Calu3 (cell line): ENCODE measurements at regions of chr7 and their contacts with region 1.

Region 1: DNA sequence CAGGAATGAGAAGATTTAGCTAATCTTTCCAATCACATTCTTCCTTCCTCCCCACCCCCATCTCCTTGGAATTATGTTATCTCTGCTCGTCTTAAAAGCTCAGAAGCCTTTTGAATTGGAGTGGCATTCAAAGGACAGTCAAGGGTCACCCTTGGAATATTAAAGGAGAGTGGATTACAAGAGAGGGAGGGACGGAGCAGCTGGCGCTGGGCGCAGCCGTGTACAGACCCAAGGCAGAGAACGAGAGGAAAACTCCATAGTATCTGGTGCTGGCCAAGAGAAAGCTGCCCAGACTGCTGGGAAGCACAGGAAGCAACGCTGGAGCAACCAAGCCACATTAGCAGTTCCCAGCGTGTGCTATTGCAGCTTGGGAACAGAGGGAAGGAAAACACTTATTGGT is 95.7 kb downstream of the POU6F2 start:
- DNase-seq: no peak
- H3K4me3 Mint-ChIP-seq: no peak overlapping the region
- H3K27ac Mint-ChIP-seq: no peak overlapping the region
- H3K4me1 Mint-ChIP-seq: no peaks in the 10 kb centered on the region
- H3K27me3 Mint-ChIP-seq: no peaks in the 10 kb centered on the region
- CTCF ChIP-seq: no peak

Region 2: DNA sequence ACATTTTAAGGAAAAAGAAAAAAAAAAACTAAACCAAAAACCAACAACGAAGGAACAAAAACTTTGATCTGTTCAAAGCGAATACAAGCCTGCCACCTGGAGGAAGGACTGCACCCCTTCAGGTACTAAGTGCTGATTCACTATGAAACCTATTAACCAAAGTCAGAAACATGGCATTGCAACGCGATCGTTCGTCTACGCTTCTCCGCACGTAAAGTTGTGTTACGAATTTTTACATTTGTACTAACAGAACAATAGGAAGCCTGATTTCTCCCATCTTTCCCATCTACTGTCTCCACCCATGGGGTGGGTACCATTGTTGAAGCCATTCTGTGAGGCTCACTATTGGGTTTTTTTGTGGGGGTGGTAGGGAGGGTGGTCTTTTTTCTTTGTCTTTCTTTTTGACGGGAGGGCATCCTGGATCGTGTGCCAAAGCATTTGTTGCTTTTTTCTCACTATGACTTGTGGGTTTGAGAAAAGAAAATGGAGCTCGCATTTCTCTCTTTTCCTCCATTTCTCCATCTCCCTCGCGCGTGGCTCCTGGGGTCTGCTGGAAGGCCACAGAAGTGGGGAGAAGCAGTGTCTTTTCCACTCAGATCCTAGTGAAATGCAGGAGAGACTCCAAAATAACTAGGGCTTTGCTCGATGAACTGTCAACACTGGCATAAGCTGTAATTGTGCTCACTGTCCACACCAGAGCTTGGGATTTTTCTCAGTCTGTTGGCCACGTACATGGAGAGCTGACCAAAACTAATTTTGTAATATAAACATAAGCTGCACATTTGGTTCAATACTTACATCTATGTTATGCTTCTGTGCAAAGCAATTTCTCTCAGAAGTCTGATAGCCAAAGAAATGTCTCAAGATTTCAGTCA is 391.9 kb after region 1 on chr7:
- CTCF ChIA-PET with region 1: interaction called, 4 read pairs
- intact Hi-C with region 1: loop called (anchors 1 kb)
- DNase-seq: peak; percentile 75
- H3K4me3 Mint-ChIP-seq: peak overlapping the region; percentile 36
- H3K27ac Mint-ChIP-seq: no peak overlapping the region
- H3K4me1 Mint-ChIP-seq: peaks cover 15% of the 10 kb centered on the region
- H3K27me3 Mint-ChIP-seq: no peaks in the 10 kb centered on the region
- CTCF ChIP-seq: peak; percentile 79